PC-3 (cell line): ENCODE measurements at regions of chr14 and their contacts with region 1.

Region 1: GRCh38 chr14:35292051-35292769 is at the start of gene PSMA6:
- DNase-seq: peak; percentile 100
- ATAC-seq: peak; percentile 93
- H3K4me3 ChIP-seq: peak within 1 kb of the TSS; percentile 90
- H3K27ac ChIP-seq: peak within 1 kb of the TSS; percentile 74
- H3K4me1 ChIP-seq: peaks cover 9% of the 10 kb centered on the region; the same call in 1 of the 2 replicates
- H3K27me3 ChIP-seq: no peaks in the 10 kb centered on the region
- CTCF ChIP-seq: no peak
- total RNA-seq, gene PSMA6: 307 and 308 TPM in 2 replicates

Region 2: DNA sequence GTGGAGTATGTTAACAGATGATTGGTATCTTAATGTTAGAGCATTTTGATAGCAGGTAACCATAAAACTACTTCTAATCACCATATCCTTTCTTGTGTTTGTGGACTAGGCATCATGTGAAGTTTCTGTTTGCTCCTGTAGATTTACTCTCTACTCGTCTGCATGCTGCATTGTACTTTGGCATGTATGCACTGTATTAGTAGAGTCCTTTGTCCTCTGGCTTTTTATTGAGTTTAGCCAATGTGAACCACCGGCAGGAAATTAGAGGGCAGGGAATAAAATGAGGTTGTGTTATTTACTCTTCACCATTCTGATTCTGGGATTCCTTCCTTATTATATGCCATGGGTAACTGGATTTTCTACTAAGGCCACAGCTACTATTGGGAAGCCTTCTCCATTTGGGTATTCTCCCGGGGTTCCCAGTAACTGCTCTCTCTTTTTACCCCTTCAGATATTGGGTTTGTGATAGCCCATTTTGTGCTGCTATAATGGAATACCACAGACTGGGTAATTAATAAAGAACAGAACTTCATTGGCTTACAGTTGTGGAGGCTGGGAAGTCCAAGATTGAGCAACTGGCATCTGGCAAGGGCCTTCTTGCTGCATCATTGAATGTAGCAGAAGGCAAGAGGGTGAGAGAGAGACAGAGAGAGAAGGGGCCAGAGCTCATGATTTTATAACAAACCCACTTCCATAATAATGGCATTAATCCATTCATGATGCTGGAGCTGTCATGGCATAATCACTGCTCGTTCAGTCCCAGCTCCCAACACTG is 223.8 kb before region 1 on chr14:
- CTCF ChIA-PET with region 1: no interaction called
- POLR2A ChIA-PET with region 1: interaction called, 17 read pairs
- intact Hi-C with region 1: no loop called
- DNase-seq: no peak
- ATAC-seq: no peak; the same call in 1 of the 2 replicates
- H3K4me3 ChIP-seq: no peak overlapping the region
- H3K27ac ChIP-seq: no peak overlapping the region
- H3K4me1 ChIP-seq: no peaks in the 10 kb centered on the region
- H3K27me3 ChIP-seq: no peaks in the 10 kb centered on the region
- CTCF ChIP-seq: no peak

Region 3: DNA sequence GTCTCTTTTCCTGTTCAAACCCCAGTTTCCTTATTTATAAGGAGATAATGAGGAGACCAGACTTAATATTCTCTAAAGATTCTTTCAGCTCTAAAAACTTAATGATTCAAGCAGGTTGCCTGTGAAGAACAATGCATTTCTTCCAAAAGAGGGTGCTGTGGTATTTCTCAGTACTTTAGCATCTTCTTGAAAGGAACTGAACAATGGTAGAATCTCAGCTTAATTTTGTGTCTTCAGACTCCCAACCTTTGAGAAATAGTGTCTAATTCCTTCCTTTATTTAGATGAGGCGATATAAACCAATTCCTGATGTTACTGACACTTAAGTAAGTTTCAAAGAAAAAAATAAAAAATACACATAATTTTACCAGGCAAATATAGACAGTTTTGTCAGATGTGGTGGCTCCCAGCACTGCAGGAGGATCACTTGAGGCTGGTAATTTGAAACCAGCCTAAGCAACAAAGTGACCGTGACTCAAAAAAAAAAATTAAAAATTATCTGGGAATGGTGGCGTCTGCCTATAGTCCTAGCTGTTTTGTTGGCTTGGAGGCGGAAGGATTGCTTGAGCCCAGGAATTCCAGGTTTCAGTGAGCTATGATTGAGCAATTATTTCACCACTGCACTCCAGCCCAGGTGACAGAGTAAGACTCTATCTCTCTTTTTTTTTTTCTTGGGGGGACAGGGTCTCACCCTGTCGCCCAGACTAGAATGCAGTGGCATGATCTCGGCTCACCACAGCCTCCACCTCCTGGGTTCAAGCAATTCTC is 76.9 kb before region 1 on chr14:
- CTCF ChIA-PET with region 1: interaction called, 6 read pairs
- POLR2A ChIA-PET with region 1: interaction called, 4 read pairs
- intact Hi-C with region 1: loop called (anchors 1 kb)
- DNase-seq: peak; percentile 63
- ATAC-seq: peak; percentile 34; the same call in 1 of the 2 replicates
- H3K4me3 ChIP-seq: no peak overlapping the region
- H3K27ac ChIP-seq: no peak overlapping the region
- H3K4me1 ChIP-seq: peaks cover 14% of the 10 kb centered on the region
- H3K27me3 ChIP-seq: no peaks in the 10 kb centered on the region
- CTCF ChIP-seq: peak; percentile 73

Region 4: DNA sequence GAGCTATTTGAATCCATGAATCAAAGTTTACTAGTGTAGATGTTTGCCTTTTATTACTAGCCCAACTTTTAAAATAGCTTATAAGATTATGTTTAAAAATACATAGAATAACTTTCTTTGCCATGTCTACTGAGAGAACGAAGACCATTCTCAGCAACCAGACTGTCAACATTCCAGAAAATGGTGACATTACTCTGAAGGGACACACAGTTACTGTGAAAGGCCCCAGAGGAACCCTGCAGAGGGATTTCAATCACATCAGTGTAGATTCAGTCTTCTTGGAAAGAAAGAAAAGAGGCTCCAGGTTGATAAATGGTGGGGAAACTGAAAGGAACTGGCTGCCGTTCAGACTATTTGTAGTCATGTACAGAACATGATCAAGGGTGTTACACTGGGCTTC is 29.9 kb before region 1 on chr14:
- CTCF ChIA-PET with region 1: no interaction called
- POLR2A ChIA-PET with region 1: interaction called, 24 read pairs
- intact Hi-C with region 1: no loop called
- DNase-seq: no peak
- ATAC-seq: no peak
- H3K4me3 ChIP-seq: no peak overlapping the region
- H3K27ac ChIP-seq: no peak overlapping the region
- H3K4me1 ChIP-seq: peaks cover 9% of the 10 kb centered on the region
- H3K27me3 ChIP-seq: no peaks in the 10 kb centered on the region
- CTCF ChIP-seq: no peak

Region 5: DNA sequence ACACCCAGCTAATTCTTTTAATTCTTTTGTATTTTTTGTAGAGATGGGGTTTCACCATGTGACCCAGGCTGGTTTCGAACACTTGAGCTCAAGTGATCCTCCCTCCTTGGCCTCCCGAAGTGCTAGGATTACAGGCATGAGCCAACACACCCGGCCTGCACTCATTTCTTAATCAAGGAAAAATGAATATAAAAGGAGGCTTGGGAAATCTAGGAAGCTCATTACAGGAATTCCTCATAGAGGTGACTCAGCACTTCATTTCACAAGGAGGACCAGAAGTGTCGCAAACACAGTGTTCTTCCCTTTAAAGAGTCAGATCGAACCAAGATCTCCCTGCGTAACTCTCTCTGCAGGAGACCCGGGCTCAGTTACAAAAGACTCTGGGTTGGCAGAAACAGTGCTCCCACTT is 82.1 kb after region 1 on chr14:
- CTCF ChIA-PET with region 1: no interaction called
- POLR2A ChIA-PET with region 1: interaction called, 10 read pairs
- intact Hi-C with region 1: no loop called
- DNase-seq: peak; percentile 84
- ATAC-seq: peak; percentile 30; the same call in 1 of the 2 replicates
- H3K4me3 ChIP-seq: no peak overlapping the region
- H3K27ac ChIP-seq: peak overlapping the region; percentile 15
- H3K4me1 ChIP-seq: peaks cover 20% of the 10 kb centered on the region
- H3K27me3 ChIP-seq: no peaks in the 10 kb centered on the region
- CTCF ChIP-seq: no peak

Region 6: DNA sequence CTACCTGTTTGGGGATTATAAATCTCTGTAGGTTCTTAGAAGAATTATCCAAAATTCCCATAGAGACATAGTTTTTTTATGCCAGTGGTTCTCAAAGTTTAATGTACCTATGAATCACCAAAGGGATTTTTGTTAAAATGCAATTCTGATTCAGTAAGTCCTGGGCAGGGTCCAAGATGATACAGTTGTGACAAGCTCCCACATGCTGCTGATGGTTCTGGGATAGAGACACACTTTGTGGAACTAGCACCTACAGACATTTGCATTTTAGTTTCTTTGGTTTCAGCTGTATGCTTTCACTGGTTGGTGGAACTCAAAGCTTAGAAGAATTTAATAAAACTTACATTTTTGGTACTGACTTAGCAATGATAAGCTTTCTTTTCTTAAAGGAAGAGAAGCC is 803.9 kb after region 1 on chr14:
- CTCF ChIA-PET with region 1: no interaction called
- POLR2A ChIA-PET with region 1: interaction called, 14 read pairs
- intact Hi-C with region 1: no loop called
- DNase-seq: peak; percentile 37
- ATAC-seq: no peak
- H3K4me3 ChIP-seq: no peak overlapping the region
- H3K27ac ChIP-seq: no peak overlapping the region
- H3K4me1 ChIP-seq: peaks cover 6% of the 10 kb centered on the region
- H3K27me3 ChIP-seq: peaks cover 27% of the 10 kb centered on the region
- CTCF ChIP-seq: no peak